Calu3 (cell line): ENCODE measurements at regions of chr7 and their contacts with region 1.

Region 1: DNA sequence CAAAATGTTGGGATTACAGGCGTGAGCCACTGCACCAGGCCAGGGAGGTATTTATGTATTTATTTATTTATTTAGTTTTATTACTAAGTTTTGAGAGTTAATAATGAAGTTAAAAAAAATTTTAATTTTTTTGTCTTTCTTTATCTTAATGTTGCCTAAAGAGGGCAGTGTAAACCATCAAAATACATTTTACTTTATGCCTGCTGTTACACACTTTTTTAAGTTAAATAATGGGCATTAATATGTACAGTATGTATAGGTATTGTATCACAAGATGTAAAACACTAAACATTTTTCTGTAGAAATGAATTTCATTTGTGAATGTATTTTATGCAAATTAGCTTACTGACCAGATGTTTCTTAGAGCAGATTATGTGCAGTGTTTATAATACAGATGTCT is 129.4 kb downstream of the AASS start:
- DNase-seq: no peak
- H3K4me3 Mint-ChIP-seq: no peak overlapping the region
- H3K27ac Mint-ChIP-seq: no peak overlapping the region
- H3K4me1 Mint-ChIP-seq: peaks cover 8% of the 10 kb centered on the region
- H3K27me3 Mint-ChIP-seq: no peaks in the 10 kb centered on the region
- CTCF ChIP-seq: no peak

Region 2: GRCh38 chr7:121624958-121625357 is 389.7 kb before region 1 on chr7:
- CTCF ChIA-PET with region 1: no interaction called
- intact Hi-C with region 1: no loop called
- DNase-seq: no peak
- H3K4me3 Mint-ChIP-seq: no peak overlapping the region
- H3K27ac Mint-ChIP-seq: no peak overlapping the region
- H3K4me1 Mint-ChIP-seq: no peaks in the 10 kb centered on the region
- H3K27me3 Mint-ChIP-seq: no peaks in the 10 kb centered on the region
- CTCF ChIP-seq: no peak

Region 3: DNA sequence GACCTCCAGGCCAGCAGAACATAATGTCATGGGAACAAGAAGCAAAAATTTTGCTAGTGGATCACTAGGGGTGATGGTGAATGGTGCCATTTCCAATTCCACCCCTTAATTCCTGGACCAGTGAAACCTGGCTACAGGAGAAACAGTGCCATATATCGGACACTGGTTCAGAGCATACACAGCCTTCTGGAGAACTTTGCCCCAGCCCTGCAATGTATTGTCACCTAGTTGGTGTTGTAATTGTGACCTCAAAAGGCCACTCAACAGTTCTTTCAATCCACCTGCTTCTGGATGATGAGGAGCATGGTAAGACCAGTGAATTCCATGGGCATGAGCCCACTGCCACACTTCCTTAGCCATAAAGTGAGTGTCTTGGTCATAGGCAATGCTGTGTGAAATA is 189.1 kb after region 1 on chr7:
- CTCF ChIA-PET with region 1: no interaction called
- intact Hi-C with region 1: no loop called
- DNase-seq: no peak
- H3K4me3 Mint-ChIP-seq: no peak overlapping the region
- H3K27ac Mint-ChIP-seq: no peak overlapping the region
- H3K4me1 Mint-ChIP-seq: peaks cover 15% of the 10 kb centered on the region
- H3K27me3 Mint-ChIP-seq: no peaks in the 10 kb centered on the region
- CTCF ChIP-seq: no peak

Region 4: DNA sequence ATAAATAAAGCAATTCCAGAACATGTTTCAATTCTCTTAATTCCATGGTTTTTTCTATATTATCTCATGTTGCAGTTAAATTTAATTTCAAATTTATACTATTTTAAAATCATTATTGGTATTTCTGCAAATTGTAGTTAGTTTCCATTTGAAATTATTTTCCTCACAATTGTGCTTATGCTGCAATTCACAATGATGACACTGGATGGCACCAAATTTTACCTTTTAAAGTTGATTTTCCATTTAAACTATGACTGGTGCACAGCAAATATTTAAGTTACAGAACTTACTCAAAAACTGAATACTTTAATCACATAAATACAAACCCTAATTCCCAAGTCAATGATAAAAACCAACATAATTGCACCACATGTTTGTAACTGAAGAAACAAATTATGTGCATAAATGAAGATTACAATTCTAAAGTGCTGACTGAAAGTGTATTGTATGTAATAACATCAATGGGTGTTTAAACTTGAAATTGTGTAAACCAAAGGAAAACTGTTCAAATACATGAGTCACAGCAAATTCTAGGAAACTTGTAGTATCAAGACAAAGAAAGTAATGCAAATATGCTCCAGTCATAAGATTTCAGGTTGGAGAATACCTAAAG is 204.7 kb after region 1 on chr7:
- CTCF ChIA-PET with region 1: no interaction called
- intact Hi-C with region 1: loop called (anchors 5 kb)
- DNase-seq: peak; percentile 10
- H3K4me3 Mint-ChIP-seq: no peak overlapping the region
- H3K27ac Mint-ChIP-seq: no peak overlapping the region
- H3K4me1 Mint-ChIP-seq: peaks cover 8% of the 10 kb centered on the region
- H3K27me3 Mint-ChIP-seq: no peaks in the 10 kb centered on the region
- CTCF ChIP-seq: peak; percentile 32

Region 5: GRCh38 chr7:122528879-122529481 is 514.3 kb after region 1 on chr7:
- CTCF ChIA-PET with region 1: no interaction called
- intact Hi-C with region 1: loop called (anchors 2 kb)
- DNase-seq: no peak
- H3K4me3 Mint-ChIP-seq: no peak overlapping the region
- H3K27ac Mint-ChIP-seq: no peak overlapping the region
- H3K4me1 Mint-ChIP-seq: no peaks in the 10 kb centered on the region
- H3K27me3 Mint-ChIP-seq: no peaks in the 10 kb centered on the region
- CTCF ChIP-seq: no peak